WTC11 (cell line): ENCODE measurements at regions of chr1 and their contacts with region 1.

Region 1: GRCh38 chr1:203084588-203085502 is 967 bp downstream of the MYOG start:
- DNase-seq: peak; percentile 84
- ATAC-seq: peak; percentile 59
- H3K4me3 Mint-ChIP-seq: no peak overlapping the region
- H3K27ac Mint-ChIP-seq: no peak overlapping the region
- H3K4me1 Mint-ChIP-seq: peaks cover 34% of the 10 kb centered on the region
- H3K27me3 Mint-ChIP-seq: no peaks in the 10 kb centered on the region; the same call in 1 of the 2 replicates
- CTCF ChIP-seq: peak; percentile 88

Region 2: DNA sequence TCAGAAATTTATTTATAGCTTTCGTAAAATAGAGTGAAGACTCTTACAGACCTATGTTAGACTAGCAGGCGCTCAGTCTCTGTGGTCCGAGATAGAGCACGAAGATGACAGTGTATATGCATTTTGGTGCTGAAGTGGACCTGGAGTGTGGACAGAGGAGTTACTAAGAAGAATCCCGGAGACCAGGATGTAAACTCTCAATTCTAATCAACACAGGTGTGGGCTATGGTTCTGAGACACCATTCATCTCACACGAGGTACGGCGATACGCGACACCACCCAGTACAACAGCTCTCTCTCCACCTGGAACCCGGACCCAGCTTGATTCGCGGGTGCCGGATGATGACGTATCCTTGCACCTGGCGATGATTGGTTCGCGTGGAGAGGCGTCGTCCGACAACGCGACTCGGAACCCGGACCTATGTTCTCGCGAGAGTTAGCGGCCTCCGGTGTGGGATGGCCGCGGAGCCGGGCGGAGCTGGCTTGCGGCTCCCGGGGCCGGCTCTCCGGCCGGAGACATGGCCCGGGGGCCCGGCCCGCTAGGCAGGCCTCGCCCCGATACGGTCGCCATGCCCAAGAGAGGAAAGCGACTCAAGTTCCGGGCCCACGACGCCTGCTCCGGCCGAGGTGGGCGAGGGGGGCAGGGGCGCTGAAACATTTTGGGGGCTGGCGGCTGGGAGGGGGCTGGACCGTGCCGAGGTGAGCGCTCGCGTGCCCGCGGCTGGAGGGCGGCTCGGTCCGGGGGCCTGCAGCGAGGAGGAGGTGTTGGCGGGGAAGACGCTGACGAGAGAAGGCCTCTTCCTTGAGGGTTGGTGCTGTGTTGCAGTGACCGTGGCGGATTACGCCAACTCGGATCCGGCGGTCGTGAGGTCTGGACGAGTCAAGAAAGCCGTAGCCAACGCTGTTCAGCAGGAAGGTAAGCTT is 77.6 kb before region 1 on chr1 and contains the start of gene TMEM183A:
- CTCF ChIA-PET with region 1: no interaction called
- POLR2A ChIA-PET with region 1: no interaction called
- DNase-seq: peak; percentile 98
- ATAC-seq: peak; percentile 91
- H3K4me3 Mint-ChIP-seq: peak within 1 kb of the TSS; percentile 96
- H3K27ac Mint-ChIP-seq: peak within 1 kb of the TSS; percentile 100
- H3K4me1 Mint-ChIP-seq: peaks cover 23% of the 10 kb centered on the region
- H3K27me3 Mint-ChIP-seq: no peaks in the 10 kb centered on the region
- CTCF ChIP-seq: no peak
- total RNA-seq, gene TMEM183A: 97.4 to 108 TPM (median 99.8 TPM) in 3 replicates

Region 3: GRCh38 chr1:203046984-203047630 is 37.7 kb before region 1 on chr1:
- CTCF ChIA-PET with region 1: interaction called, 21 read pairs
- POLR2A ChIA-PET with region 1: no interaction called
- DNase-seq: no peak
- ATAC-seq: no peak
- H3K4me3 Mint-ChIP-seq: no peak overlapping the region
- H3K27ac Mint-ChIP-seq: no peak overlapping the region
- H3K4me1 Mint-ChIP-seq: peaks cover 20% of the 10 kb centered on the region
- H3K27me3 Mint-ChIP-seq: no peaks in the 10 kb centered on the region; the same call in 1 of the 2 replicates
- CTCF ChIP-seq: no peak

Region 4: DNA sequence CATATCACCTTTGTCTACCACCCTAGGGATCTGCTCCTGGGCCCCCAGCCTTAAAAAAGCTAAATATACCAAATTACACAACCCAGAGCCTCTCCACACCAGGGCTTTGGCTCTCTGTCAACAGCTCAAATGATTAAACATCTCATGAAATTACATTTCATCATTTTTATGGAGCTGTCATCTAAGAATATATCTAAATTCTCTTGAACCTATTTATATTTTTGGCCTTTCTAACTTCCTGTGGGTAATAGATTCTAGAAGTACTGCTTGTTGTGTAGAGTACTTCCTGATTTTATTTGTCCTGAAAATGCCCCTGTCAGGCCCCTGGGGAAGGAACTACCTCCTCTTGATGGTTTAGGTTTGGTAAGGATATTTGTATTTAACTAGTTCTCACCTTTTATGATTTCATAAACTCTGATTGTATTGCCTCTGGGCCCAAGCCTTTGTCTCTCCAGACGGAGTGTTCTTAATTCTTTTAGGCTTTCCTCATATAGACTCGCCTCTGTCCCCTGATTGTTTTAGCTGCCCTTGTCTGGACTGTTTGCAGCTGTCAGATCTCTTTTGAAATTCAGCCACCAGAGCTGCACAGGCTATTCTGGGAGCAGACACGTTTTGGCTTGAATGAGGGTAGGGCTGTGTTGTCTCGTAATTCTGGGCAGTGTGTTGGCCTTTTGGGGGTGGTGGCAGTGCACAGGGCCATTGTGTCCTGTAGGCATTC is 15.7 kb before region 1 on chr1:
- CTCF ChIA-PET with region 1: interaction called, 16 read pairs
- POLR2A ChIA-PET with region 1: interaction called, 3 read pairs
- DNase-seq: no peak
- ATAC-seq: no peak
- H3K4me3 Mint-ChIP-seq: no peak overlapping the region
- H3K27ac Mint-ChIP-seq: no peak overlapping the region
- H3K4me1 Mint-ChIP-seq: peaks cover 9% of the 10 kb centered on the region
- H3K27me3 Mint-ChIP-seq: peaks cover 2% of the 10 kb centered on the region; the same call in 1 of the 2 replicates
- CTCF ChIP-seq: no peak

Region 5: GRCh38 chr1:203148125-203148524 is 63.3 kb after region 1 on chr1:
- CTCF ChIA-PET with region 1: interaction called, 17 read pairs
- POLR2A ChIA-PET with region 1: no interaction called
- DNase-seq: peak; percentile 44
- ATAC-seq: peak; percentile 50
- H3K4me3 Mint-ChIP-seq: no peak overlapping the region
- H3K27ac Mint-ChIP-seq: no peak overlapping the region
- H3K4me1 Mint-ChIP-seq: peaks cover 87% of the 10 kb centered on the region
- H3K27me3 Mint-ChIP-seq: no peaks in the 10 kb centered on the region
- CTCF ChIP-seq: no peak